Adrenal gland (tissue), 19 donors: ENCODE measurements at regions of chr17 and their contacts with region 1.

Region 1: GRCh38 chr17:40203131-40203530 is 16.0 kb upstream of the WIPF2 start:
- DNase-seq: peak in 5 of 7 donors; percentile 40 to 65 (median 57)
- H3K4me3 ChIP-seq: no peak overlapping the region
- H3K27ac ChIP-seq: peak overlapping the region in 3 of 5 donors; percentile 10 to 61 (median 23)
- H3K4me1 ChIP-seq: no peaks in the 10 kb centered on the region
- H3K27me3 ChIP-seq: no peaks in the 10 kb centered on the region
- CTCF ChIP-seq: no peak
- POLR2A ChIP-seq: no peak

Region 2: GRCh38 chr17:40287494-40288369 is 84.6 kb after region 1 on chr17 and contains the start of gene CDC6:
- intact Hi-C with region 1: loop called (anchors 5 kb)
- DNase-seq: peak; percentile 98 to 100 (median 99)
- H3K4me3 ChIP-seq: peak within 1 kb of the TSS in 2 of 4 donors; percentile 40 to 63
- H3K27ac ChIP-seq: peak within 1 kb of the TSS in 2 of 5 donors; percentile 21 to 47
- H3K4me1 ChIP-seq: peaks cover 0 to 18% of the 10 kb centered on the region in 2 donors
- H3K27me3 ChIP-seq: no peaks in the 10 kb centered on the region
- CTCF ChIP-seq: no peak
- POLR2A ChIP-seq: peak in 1 of 2 donors; percentile 40
- total RNA-seq, gene CDC6: 0.69 to 12.1 (median 2.7) TPM

Region 3: DNA sequence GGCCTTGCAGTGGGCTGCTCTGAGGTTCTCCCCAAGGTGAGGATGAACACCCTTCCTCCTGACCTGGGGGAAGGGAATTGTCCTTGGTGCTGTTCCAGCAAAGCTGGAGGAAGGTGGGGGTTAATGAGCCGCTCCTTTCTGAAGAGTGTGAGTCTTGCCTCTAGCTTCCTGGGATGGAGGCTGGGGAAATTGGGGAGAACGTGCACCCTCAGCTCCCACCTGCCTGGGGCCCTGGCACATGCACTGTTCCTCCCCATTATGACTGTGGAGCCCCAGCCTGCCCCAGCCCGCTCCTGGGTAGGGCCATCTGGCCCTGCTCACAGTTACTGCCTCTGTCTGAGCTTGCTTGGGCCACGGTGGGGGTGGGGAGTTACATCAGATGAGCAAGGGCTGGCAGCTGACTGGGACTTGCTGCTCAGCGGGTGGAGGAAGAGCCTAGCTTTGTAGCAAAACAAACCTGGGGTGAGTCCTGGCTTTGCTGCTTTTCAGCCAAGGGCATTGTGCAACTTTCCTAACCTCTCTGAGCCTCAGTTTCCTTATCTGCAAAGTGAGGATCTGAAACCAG is 287.2 kb after region 1 on chr17:
- intact Hi-C with region 1: no loop called
- DNase-seq: peak in 4 of 7 donors; percentile 23 to 80 (median 37)
- H3K4me3 ChIP-seq: no peak overlapping the region
- H3K27ac ChIP-seq: peak overlapping the region in 1 of 5 donors; percentile 35
- H3K4me1 ChIP-seq: no peaks in the 10 kb centered on the region
- H3K27me3 ChIP-seq: no peaks in the 10 kb centered on the region
- CTCF ChIP-seq: no peak
- POLR2A ChIP-seq: no peak